Lower leg skin (tissue), 4 donors: ENCODE measurements at regions of chr6 and their contacts with region 1.

Region 1: GRCh38 chr6:160930547-160931377 is 60.8 kb upstream of the MAP3K4 start:
- DNase-seq: peak; percentile 71 to 95
- H3K4me3 ChIP-seq: peak overlapping the region; percentile 21
- CTCF ChIP-seq: peak in 1 of 3 donors; percentile 74
- POLR2A ChIP-seq: no peak

Region 2: GRCh38 chr6:160992061-160992979 is 61.6 kb after region 1 on chr6:
- intact Hi-C with region 1: loop called (anchors 2 kb)
- DNase-seq: peak; percentile 62 to 88
- H3K4me3 ChIP-seq: peak overlapping the region; percentile 89
- CTCF ChIP-seq: no peak
- POLR2A ChIP-seq: no peak